Activated CD4-positive, alpha-beta T cell treated with anti-CD3 and anti-CD28 coated beads for 36 hours (primary cell): ENCODE measurements at regions of chr10 and their contacts with region 1.

Region 1: DNA sequence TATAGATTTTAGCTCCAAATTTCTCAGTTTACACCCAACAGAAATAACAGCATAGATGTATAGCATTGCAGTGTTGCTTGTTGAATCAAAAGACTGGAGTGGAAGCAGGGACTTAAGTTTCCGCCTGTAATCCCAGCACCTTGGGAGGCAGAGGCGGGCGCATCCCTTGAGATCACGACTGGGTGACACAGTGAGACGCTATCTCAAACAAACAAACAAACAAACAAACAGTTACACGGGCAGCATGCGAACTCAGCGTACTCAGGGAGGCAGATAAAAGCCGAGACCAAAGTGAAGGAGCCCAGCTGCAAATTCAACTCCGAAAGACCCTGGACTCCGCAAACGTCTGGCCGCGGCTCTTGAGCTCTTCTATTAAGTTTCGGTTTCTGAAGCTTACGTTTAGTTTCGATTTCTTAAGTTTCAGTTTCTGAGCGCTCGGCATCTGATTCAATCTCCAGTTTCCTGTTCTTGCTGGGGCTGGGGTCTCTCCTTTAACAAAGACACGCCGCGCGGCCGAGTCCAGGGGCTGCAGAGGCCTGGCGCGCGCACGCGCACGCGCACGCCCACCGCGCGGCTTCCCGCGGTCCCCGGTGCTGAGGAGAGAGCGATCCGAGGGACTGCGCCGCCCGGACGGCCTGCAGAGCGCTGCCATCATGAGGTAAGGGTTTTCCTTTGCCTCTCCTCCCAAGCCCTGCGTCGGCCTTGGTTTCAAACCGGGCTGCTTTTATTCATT is at the start of gene IFIT5:
- DNase-seq: peak; percentile 76
- ATAC-seq: peak; percentile 74
- H3K4me3 Mint-ChIP-seq: peak within 1 kb of the TSS; percentile 81
- H3K27ac Mint-ChIP-seq: peak within 1 kb of the TSS; percentile 98
- H3K4me1 Mint-ChIP-seq: peaks cover 41% of the 10 kb centered on the region
- H3K27me3 Mint-ChIP-seq: no peaks in the 10 kb centered on the region
- total RNA-seq, gene IFIT5: 14.4 to 14.9 TPM

Region 2: DNA sequence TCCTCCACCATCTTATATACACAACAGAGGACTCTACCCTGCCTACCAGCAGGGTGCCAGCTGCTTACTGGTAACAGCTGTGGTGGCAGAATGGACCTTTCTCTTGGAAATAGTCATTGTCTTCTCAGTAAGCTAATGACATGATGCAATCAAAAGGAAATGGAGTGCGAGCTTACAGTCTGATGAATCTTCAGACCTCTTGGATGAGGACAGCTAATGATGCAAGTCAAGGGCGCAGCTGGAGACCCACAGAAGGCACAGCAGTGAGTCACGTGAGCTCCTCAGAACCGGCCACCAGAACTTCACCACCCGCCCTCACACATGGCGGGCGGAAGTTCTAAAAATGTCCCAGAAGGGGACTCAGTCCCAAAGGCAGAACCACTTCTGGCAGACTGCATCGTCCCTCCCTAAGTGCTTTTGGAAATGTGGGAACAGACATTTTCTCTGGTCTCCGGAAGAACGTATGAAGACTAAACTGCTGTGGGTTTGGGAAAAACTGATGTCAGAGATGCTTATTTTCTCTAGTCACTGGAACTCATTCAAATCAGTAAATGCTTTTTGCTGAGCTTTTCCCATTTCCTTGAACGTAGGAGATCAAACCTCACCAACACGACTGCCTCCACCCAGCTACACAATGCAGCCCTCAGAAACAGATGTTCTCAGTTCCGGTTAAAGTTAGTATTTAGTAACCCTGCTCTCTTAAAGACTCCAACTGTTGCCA is 327.4 kb before region 1 on chr10:
- CTCF ChIA-PET with region 1: no interaction called
- POLR2A ChIA-PET with region 1: no interaction called
- intact Hi-C with region 1: loop called in 1 of 2 experiments (anchors 5 kb)
- DNase-seq: peak; percentile 53
- ATAC-seq: peak; percentile 55
- H3K4me3 Mint-ChIP-seq: peak overlapping the region; percentile 11
- H3K27ac Mint-ChIP-seq: peak overlapping the region; percentile 78
- H3K4me1 Mint-ChIP-seq: peaks cover 11% of the 10 kb centered on the region
- H3K27me3 Mint-ChIP-seq: peaks cover under 1% of the 10 kb centered on the region

Region 3: DNA sequence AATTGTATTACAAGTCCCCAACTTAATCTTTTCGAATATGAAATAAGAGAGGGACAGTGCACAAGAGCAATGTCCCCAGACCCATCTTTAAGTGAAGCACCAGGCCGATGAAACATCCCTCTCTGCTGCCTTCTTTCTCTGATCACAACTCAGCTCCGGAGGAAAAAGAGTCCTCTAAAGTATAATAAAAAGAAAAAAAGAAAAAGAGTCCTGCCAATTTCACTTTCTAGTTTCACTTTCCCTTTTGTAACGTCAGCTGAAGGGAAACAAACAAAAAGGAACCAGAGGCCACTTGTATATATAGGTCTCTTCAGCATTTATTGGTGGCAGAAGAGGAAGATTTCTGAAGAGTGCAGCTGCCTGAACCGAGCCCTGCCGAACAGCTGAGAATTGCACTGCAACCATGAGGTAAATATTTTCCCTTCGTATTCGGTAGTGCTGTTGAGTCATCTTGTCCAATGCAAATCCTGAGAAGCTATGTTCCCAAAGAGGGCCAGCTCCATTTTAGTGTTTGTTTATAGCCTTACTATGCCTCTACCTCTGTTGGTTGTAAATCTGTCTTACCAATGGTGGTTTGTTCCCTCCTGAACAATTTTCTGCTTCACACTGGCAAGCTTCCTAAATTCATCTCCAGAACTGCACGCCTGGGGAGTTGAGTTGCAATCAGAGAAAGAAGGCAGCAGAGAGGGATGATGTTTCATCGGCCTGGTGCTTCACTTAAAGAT is 112.4 kb before region 1 on chr10 and contains the start of gene IFIT2:
- CTCF ChIA-PET with region 1: interaction called, 3 read pairs
- POLR2A ChIA-PET with region 1: interaction called, 3 read pairs
- intact Hi-C with region 1: loop called in 1 of 2 experiments (anchors 2 kb)
- DNase-seq: peak; percentile 50
- ATAC-seq: peak; percentile 74
- H3K4me3 Mint-ChIP-seq: peak within 1 kb of the TSS; percentile 74
- H3K27ac Mint-ChIP-seq: peak within 1 kb of the TSS; percentile 86
- H3K4me1 Mint-ChIP-seq: peaks cover 42% of the 10 kb centered on the region
- H3K27me3 Mint-ChIP-seq: no peaks in the 10 kb centered on the region
- total RNA-seq, gene IFIT2: 38.2 to 43.5 TPM

Region 4: GRCh38 chr10:89643431-89644331 is 229.4 kb after region 1 on chr10:
- CTCF ChIA-PET with region 1: no interaction called
- POLR2A ChIA-PET with region 1: no interaction called
- intact Hi-C with region 1: loop called (anchors 2 kb)
- DNase-seq: peak; percentile 79
- ATAC-seq: peak; percentile 87
- H3K4me3 Mint-ChIP-seq: no peak overlapping the region
- H3K27ac Mint-ChIP-seq: no peak overlapping the region
- H3K4me1 Mint-ChIP-seq: peaks cover 6% of the 10 kb centered on the region
- H3K27me3 Mint-ChIP-seq: peaks cover 6% of the 10 kb centered on the region

Region 5: DNA sequence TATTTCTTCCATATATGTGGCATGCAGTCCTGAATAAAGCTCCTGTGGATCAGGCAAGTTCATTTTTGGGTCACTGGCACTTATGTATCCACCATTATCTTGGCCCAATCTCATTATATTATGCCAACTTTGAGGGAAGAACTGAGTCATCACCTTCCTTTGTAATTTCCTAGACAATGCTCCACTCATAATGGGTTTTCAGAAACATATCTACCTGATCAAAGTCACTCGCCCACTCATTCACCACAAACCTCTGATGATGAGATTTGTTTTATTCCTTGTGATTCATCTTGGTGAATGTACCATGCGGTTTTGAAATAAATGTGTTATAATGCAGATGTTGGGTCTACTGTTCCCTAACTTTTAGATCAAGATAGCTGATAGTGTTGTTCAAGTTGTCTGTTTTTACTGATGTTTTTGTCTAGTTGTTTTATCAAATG is 812.9 kb after region 1 on chr10:
- CTCF ChIA-PET with region 1: no interaction called
- POLR2A ChIA-PET with region 1: no interaction called
- intact Hi-C with region 1: loop called in 1 of 2 experiments (anchors 10 kb)
- DNase-seq: peak; percentile 79
- ATAC-seq: peak; percentile 94
- H3K4me3 Mint-ChIP-seq: no peak overlapping the region
- H3K27ac Mint-ChIP-seq: no peak overlapping the region
- H3K4me1 Mint-ChIP-seq: peaks cover 20% of the 10 kb centered on the region
- H3K27me3 Mint-ChIP-seq: peaks cover 35% of the 10 kb centered on the region